MCF 10A (cell line): ENCODE measurements at regions of chr1 and their contacts with region 1.

Region 1: DNA sequence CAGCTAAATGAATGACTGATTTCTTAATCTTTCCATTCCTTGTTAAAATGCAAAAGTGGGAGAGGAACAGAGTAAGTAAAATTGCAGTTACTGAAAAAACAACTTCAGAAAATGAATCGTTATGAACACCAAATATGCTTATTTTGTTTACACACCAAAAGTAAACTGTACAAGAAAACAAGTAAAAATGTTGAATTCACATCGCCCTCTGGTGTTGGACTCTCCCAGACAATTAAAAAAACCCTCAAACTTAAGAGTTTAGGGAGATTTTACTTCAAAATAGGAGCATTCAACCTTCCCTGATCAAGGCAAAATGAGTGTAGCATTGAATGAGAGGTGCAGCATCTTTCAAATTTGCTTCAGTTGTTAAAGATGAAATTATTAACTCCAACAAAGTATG is 19.4 kb upstream of the ESRRG start:
- DNase-seq: peak; percentile 34
- H3K4me3 Mint-ChIP-seq: no peak overlapping the region
- H3K27ac Mint-ChIP-seq: no peak overlapping the region
- H3K4me1 Mint-ChIP-seq: no peaks in the 10 kb centered on the region
- H3K27me3 Mint-ChIP-seq: peaks cover 59% of the 10 kb centered on the region
- CTCF ChIP-seq: peak; percentile 66

Region 2: DNA sequence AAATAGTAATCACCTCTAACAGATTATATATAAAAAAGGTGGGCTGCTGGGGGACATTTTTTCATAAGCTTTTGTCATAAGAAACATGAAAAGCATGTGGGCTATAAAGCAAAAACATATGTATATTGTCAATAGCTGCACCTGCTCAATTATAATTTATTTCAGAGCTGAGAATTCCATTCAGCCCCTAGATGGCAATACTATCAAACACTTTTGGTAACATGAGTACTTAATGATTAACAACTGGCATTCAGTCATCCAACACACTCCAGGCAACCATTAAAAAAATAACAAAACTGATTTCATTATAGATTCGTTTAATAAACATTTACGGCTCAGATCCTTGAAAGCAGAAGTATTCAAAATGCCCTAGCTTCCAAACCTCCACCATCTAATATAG is 1060.4 kb before region 1 on chr1:
- CTCF ChIA-PET with region 1: interaction called, 4 read pairs
- POLR2A ChIA-PET with region 1: no interaction called
- intact Hi-C with region 1: loop called (anchors 2 kb)
- DNase-seq: peak; percentile 33
- H3K4me3 Mint-ChIP-seq: no peak overlapping the region
- H3K27ac Mint-ChIP-seq: no peak overlapping the region
- H3K4me1 Mint-ChIP-seq: no peaks in the 10 kb centered on the region
- H3K27me3 Mint-ChIP-seq: peaks cover 47% of the 10 kb centered on the region
- CTCF ChIP-seq: peak; percentile 44

Region 3: DNA sequence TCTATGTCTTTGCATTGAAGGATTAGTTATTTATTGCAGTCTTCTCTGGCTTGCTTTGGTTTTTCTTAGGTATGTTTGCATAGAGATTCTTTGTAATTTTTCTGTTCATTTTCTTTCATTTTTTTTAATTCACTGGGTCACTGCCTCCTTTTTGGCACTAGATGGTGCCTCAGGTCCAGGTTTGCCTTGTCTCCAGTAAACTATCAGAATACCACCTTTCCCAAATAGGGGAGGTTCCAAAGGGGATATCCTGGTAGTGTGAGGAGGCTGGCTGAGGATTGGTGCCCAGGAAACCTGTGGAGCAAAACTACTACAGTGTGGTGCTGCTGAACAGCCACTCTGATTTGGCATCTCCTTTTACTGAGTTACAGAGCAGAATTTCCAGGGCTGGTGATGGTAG is 918.4 kb before region 1 on chr1:
- CTCF ChIA-PET with region 1: no interaction called
- POLR2A ChIA-PET with region 1: no interaction called
- intact Hi-C with region 1: loop called (anchors 2 kb)
- DNase-seq: peak; percentile 32
- H3K4me3 Mint-ChIP-seq: no peak overlapping the region
- H3K27ac Mint-ChIP-seq: no peak overlapping the region
- H3K4me1 Mint-ChIP-seq: no peaks in the 10 kb centered on the region
- H3K27me3 Mint-ChIP-seq: peaks cover 96% of the 10 kb centered on the region
- CTCF ChIP-seq: peak; percentile 64

Region 4: DNA sequence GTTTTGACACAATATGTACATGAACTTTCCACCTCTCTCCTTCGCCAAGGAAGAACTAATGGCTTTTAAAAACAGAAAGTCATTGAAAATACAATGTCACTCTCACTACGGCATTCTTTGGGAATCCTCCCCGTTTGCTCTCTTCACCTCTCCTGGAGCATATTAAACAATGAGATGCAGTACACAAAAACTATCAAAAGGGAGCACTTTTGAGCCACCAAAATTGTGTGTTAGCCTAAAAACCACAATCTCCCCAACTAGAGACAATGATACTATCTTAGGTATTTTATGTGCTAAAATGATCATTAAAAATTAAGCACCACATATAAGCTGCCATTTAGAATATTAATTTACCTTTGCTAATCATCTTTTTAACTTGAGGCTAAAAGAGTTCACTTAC is 750.0 kb before region 1 on chr1:
- CTCF ChIA-PET with region 1: no interaction called
- POLR2A ChIA-PET with region 1: no interaction called
- intact Hi-C with region 1: loop called (anchors 1 kb)
- DNase-seq: peak; percentile 63
- H3K4me3 Mint-ChIP-seq: no peak overlapping the region
- H3K27ac Mint-ChIP-seq: no peak overlapping the region
- H3K4me1 Mint-ChIP-seq: no peaks in the 10 kb centered on the region
- H3K27me3 Mint-ChIP-seq: peaks cover 75% of the 10 kb centered on the region
- CTCF ChIP-seq: peak; percentile 69

Region 5: DNA sequence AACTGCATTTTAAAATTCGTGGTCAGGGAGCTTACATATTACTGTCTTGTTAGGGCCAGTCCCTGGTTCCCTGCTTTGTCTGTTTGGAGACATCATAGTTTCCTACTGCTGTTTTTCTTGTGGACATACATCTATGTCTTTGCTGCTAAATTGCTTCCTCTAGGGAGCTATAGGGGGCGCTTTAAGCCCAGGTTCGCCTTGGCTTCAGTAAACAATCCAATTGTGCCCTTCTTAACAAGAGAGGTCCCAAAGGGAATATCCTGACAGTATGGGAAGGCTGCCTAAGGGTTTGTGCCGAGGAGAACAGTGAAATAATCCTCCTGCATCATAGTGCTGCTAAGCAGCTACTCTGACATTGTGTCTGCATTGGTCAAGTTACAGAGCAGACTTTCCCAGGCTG is 431.8 kb before region 1 on chr1:
- CTCF ChIA-PET with region 1: no interaction called
- POLR2A ChIA-PET with region 1: no interaction called
- intact Hi-C with region 1: loop called (anchors 1 kb)
- DNase-seq: peak; percentile 75
- H3K4me3 Mint-ChIP-seq: no peak overlapping the region
- H3K27ac Mint-ChIP-seq: no peak overlapping the region
- H3K4me1 Mint-ChIP-seq: no peaks in the 10 kb centered on the region
- H3K27me3 Mint-ChIP-seq: peaks cover 77% of the 10 kb centered on the region
- CTCF ChIP-seq: peak; percentile 95

Region 6: DNA sequence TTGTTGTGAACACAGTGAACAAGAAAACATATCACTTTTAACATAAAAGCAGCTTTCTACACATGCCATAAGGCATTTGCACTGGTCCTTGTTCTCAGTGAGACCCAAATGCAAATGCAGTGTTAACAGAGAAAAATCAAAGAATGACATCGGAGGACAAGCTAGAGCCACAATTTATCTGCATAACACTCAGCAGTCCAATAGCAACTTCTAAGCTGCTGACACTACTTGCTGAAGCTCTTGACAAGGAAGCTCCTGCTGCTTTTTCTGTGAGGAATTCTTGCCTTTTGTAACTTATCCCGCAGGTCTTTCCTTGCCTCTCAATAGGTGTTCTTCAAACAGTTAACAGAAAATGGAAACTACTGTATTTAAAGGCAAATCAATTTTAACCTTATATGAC is 354.1 kb before region 1 on chr1:
- CTCF ChIA-PET with region 1: no interaction called
- POLR2A ChIA-PET with region 1: no interaction called
- intact Hi-C with region 1: no loop called
- DNase-seq: no peak
- H3K4me3 Mint-ChIP-seq: no peak overlapping the region
- H3K27ac Mint-ChIP-seq: no peak overlapping the region
- H3K4me1 Mint-ChIP-seq: no peaks in the 10 kb centered on the region
- H3K27me3 Mint-ChIP-seq: peaks cover 89% of the 10 kb centered on the region
- CTCF ChIP-seq: no peak